ENCODE measurements at regions of chr1 and their contacts with region 1.

Region 1: GRCh38 chr1:155063550-155064110 is at the start of gene EFNA4:
- DNase-seq: peak; percentile 85 to 89 (median 88)
- ATAC-seq: peak; percentile 80 to 91 (median 88)
- H3K4me3 ChIP-seq: peak within 1 kb of the TSS; percentile 55 to 98 (median 82)
- H3K27ac ChIP-seq: peak within 1 kb of the TSS in 11 of 12 donors; percentile 56 to 84 (median 71)
- H3K4me1 ChIP-seq: peaks cover 0 to 42% (median 25%) of the 10 kb centered on the region in 12 donors
- H3K27me3 ChIP-seq: no peaks in the 10 kb centered on the region
- CTCF ChIP-seq: no peak
- POLR2A ChIP-seq: no peak
- total RNA-seq, gene EFNA4: 1.1 to 3.3 (median 2.2) TPM

Region 2: DNA sequence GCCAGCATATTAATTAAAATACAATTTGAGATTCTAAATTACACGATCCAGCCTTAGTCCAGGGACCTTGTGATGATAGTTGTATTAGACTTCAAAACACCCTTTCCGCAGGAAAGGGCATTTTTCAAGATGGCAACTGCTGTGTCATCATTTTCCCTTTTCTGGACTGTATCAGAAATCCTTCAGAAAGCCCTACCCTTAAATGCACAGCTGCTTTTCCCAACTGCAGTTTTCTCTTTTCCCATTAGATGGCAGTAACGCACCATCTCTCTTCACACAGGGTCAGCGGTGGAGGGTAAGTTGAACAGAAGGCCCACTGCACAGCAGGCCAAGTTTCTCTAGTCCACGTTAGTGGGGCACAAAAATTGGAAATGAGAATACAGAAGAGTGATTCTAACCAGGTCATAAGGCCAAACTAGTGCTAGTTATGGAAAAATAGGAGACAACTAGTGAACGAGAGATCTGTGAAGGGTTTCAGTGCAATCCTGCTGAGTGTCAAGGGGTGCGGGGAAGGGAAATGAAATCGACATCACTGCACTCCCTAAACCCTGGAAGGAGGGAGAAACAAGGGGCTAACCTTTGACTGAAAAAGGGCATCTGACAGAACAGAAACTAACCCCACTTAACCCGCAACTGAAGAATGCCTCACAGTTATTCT is 583.7 kb before region 1 on chr1:
- intact Hi-C with region 1: loop called in 1 of 10 experiments (anchors 5 kb)
- DNase-seq: peak in 4 of 5 donors; percentile 42 to 70 (median 56)
- ATAC-seq: peak; percentile 60 to 93 (median 91)
- H3K4me3 ChIP-seq: no peak overlapping the region
- H3K27ac ChIP-seq: peak overlapping the region in 5 of 12 donors; percentile 2 to 53 (median 11)
- H3K4me1 ChIP-seq: peaks cover 3 to 46% (median 10%) of the 10 kb centered on the region in 12 donors
- H3K27me3 ChIP-seq: no peaks in the 10 kb centered on the region
- CTCF ChIP-seq: peak; percentile 87 to 97 (median 95)
- POLR2A ChIP-seq: no peak

Region 3: GRCh38 chr1:154955718-154956543 is 107.7 kb before region 1 on chr1 and contains the start of gene PBXIP1:
- intact Hi-C with region 1: loop called in 6 of 10 experiments (anchors 5 to 10 kb)
- DNase-seq: peak; percentile 68 to 89 (median 79)
- ATAC-seq: peak; percentile 79 to 90 (median 82)
- H3K4me3 ChIP-seq: peak within 1 kb of the TSS; percentile 38 to 82 (median 61)
- H3K27ac ChIP-seq: peak within 1 kb of the TSS; percentile 59 to 85 (median 79)
- H3K4me1 ChIP-seq: peaks cover 8 to 74% (median 48%) of the 10 kb centered on the region in 12 donors
- H3K27me3 ChIP-seq: no peaks in the 10 kb centered on the region
- CTCF ChIP-seq: peak in 8 of 12 donors; percentile 6 to 45 (median 23)
- POLR2A ChIP-seq: peak in 1 of 2 donors; percentile 47
- total RNA-seq, gene PBXIP1: 38.2 to 70.4 (median 51.7) TPM

Region 4: GRCh38 chr1:154974063-154974807 is 89.4 kb before region 1 on chr1 and contains the start of gene CKS1B:
- intact Hi-C with region 1: loop called in 2 of 10 experiments (anchors 5 kb)
- DNase-seq: peak; percentile 95 to 99 (median 98)
- ATAC-seq: peak; percentile 86 to 93 (median 88)
- H3K4me3 ChIP-seq: peak within 1 kb of the TSS; percentile 51 to 84 (median 74)
- H3K27ac ChIP-seq: peak within 1 kb of the TSS; percentile 92 to 99 (median 99)
- H3K4me1 ChIP-seq: peaks cover 22 to 61% (median 50%) of the 10 kb centered on the region in 12 donors
- H3K27me3 ChIP-seq: no peaks in the 10 kb centered on the region
- CTCF ChIP-seq: no peak
- POLR2A ChIP-seq: peak in 1 of 2 donors; percentile 51
- total RNA-seq, gene CKS1B: 11.0 to 30.0 (median 16.7) TPM

Region 5: GRCh38 chr1:155022927-155023236 is 40.7 kb before region 1 on chr1:
- intact Hi-C with region 1: no loop called
- DNase-seq: peak in 3 of 5 donors; percentile 37 to 66 (median 55)
- ATAC-seq: peak; percentile 32 to 62 (median 52)
- H3K4me3 ChIP-seq: no peak overlapping the region
- H3K27ac ChIP-seq: no peak overlapping the region
- H3K4me1 ChIP-seq: peaks cover 2 to 18% (median 3%) of the 10 kb centered on the region in 12 donors
- H3K27me3 ChIP-seq: no peaks in the 10 kb centered on the region
- CTCF ChIP-seq: no peak
- POLR2A ChIP-seq: no peak

Region 6: GRCh38 chr1:155050560-155051341 is 12.9 kb before region 1 on chr1 and contains the start of gene ADAM15:
- intact Hi-C with region 1: loop called in 3 of 10 experiments (anchors 1 kb)
- DNase-seq: peak; percentile 86 to 94 (median 86)
- ATAC-seq: peak; percentile 43 to 90 (median 72)
- H3K4me3 ChIP-seq: peak within 1 kb of the TSS; percentile 54 to 99 (median 86)
- H3K27ac ChIP-seq: peak within 1 kb of the TSS; percentile 86 to 99 (median 94)
- H3K4me1 ChIP-seq: peaks cover 0 to 43% (median 23%) of the 10 kb centered on the region in 12 donors
- H3K27me3 ChIP-seq: no peaks in the 10 kb centered on the region
- CTCF ChIP-seq: peak; percentile 85 to 97 (median 92)
- POLR2A ChIP-seq: no peak
- total RNA-seq, gene ADAM15: 55.8 to 199 (median 67.5) TPM

Region 7: DNA sequence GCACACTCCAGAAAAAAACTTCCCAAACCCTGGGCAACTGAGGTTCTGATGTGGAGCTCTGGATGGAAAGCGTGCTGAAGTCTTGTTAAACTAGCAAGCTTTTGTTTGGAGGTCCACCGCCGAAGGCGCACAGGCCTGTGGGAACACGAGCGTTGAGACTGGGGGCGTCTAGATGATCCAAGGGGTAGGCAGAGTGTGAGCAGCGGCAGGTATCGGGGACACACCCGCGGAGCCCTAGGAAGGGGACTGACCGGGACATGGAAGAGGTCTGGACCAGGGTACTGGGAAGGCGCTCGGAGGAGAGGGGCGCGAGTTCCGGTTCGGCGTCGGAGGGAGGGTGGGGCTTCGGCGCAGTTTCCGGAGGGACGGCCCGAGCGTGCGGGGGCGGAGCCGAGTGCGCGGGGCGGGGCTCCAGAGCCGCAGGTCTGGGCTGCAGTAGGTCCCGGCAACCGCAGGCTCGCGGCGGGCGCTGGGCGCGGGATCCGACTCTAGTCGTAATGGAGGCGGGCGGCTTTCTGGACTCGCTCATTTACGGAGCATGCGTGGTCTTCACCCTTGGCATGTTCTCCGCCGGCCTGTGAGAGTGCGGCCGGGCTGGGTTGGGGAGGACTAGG is 71.9 kb after region 1 on chr1 and contains the start of gene SLC50A1:
- intact Hi-C with region 1: loop called in 1 of 10 experiments (anchors 2 kb)
- DNase-seq: peak; percentile 95 to 97 (median 96)
- ATAC-seq: peak; percentile 91 to 93 (median 92)
- H3K4me3 ChIP-seq: peak within 1 kb of the TSS; percentile 47 to 86 (median 60)
- H3K27ac ChIP-seq: peak within 1 kb of the TSS; percentile 90 to 99 (median 98)
- H3K4me1 ChIP-seq: peaks cover 21 to 86% (median 67%) of the 10 kb centered on the region in 12 donors
- H3K27me3 ChIP-seq: no peaks in the 10 kb centered on the region
- CTCF ChIP-seq: peak in 8 of 12 donors; percentile 17 to 55 (median 35)
- POLR2A ChIP-seq: peak; percentile 56 to 91
- total RNA-seq, gene SLC50A1: 5.4 to 21.7 (median 9.7) TPM

Region 8: DNA sequence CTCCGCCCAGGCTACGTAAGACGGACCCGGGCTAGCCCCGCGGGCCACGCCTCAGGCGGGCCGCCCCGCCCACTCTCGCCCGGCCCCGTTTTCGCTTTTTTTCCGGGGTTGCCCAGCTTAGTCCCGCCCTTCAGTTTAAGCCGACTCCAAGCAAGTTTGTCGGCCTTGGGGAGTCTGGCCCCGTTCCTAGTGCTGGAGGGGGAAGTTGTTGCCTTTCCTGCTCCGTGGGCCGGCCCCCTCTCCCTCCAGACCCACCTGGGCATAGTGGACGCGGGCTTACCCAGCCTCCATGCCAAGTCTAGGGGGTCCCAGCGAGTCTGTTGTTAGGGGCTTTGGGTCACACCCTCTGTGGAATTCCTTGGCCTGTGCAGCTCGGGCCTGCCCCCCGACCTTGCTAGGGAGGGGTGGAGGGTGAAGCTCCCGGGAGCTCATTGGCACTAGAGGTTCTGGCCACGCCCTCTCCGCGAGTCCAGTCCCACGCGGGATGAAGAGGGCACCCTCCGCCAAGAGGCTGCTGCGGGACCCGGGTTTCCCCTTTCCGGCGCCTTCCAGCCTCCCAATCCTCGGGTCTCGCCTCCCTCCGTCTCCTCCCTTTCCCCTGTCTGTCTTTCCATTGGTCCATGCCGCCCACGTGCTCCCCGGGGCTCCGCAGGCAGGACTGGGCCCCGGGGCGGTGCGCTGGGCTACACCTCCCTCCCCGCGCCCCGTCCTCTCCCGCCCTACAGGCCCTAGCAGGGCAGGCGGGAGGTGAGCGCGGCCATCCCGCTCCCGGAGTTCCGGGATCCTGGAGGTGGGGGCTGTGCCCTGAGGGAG is 260.4 kb after region 1 on chr1:
- intact Hi-C with region 1: no loop called
- DNase-seq: peak; percentile 97 to 98 (median 97)
- ATAC-seq: peak; percentile 85 to 91 (median 90)
- H3K4me3 ChIP-seq: peak overlapping the region; percentile 53 to 93 (median 80)
- H3K27ac ChIP-seq: peak overlapping the region; percentile 92 to 99 (median 95)
- H3K4me1 ChIP-seq: peaks cover 6 to 51% (median 31%) of the 10 kb centered on the region in 12 donors
- H3K27me3 ChIP-seq: no peaks in the 10 kb centered on the region
- CTCF ChIP-seq: no peak
- POLR2A ChIP-seq: peak in 1 of 2 donors; percentile 90

Region 9: DNA sequence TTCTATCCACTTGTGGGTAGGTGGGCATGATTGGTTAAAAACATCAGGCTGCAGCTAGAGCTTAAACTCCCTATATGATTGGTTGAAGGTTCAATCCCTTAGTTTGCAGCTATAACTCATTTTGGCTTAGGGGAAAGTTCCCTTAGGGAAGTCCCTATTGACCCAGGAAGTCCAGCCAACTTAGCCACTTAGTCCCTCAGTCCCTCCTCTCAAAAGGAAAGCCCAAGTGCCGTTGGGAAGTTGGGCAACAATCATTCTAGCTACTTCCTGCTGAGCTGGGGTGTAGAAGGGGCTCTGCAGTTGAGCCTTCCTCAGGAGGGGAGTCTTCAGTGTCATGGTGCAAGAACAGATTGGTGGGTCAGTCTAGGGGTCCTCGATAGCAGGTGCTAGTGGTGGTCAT is 558.6 kb after region 1 on chr1:
- intact Hi-C with region 1: no loop called
- DNase-seq: no peak
- ATAC-seq: no peak
- H3K4me3 ChIP-seq: no peak overlapping the region
- H3K27ac ChIP-seq: no peak overlapping the region
- H3K4me1 ChIP-seq: no peaks in the 10 kb centered on the region
- H3K27me3 ChIP-seq: no peaks in the 10 kb centered on the region
- CTCF ChIP-seq: no peak
- POLR2A ChIP-seq: no peak